ENCODE measurements at regions of chr12 and their contacts with region 1.

Region 1: DNA sequence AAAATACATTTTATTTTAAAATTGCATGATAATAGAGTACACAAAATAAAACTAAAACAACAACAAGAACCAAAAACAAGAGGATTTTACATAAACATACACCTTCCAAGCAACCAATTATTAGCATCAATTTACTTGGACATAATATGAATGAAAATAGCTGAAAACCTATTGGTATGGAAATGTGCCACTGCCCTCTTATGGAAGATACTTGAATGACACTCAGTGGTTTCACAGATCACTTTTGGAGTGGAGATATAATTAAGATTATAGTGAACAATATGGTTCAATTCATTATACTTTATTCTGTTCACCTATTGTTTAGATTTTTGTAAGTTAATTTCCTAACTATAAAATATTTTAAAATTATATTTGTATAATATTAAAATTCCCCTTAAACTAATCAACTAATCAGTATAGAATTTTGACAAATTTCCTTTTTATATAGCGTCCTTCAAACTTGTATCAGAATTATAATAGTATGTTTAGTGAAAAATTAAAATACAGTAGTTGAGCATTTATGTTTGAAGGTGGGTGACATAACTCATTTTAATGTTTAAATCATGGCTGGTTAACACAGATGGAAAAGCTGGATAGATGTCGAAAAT is 70.1 kb downstream of the SLC6A15 start:
- DNase-seq: no peak
- ATAC-seq: peak; percentile 65; the same call in 2 of the 3 replicates
- H3K4me3 ChIP-seq: no peak overlapping the region
- H3K27ac ChIP-seq: no peak overlapping the region
- H3K4me1 ChIP-seq: no peaks in the 10 kb centered on the region
- H3K27me3 ChIP-seq: no peaks in the 10 kb centered on the region
- CTCF ChIP-seq: peak; percentile 61 to 66 (median 61)
- EP300 ChIP-seq: no peak
- POLR2A ChIP-seq: no peak
- RAD21 ChIP-seq: peak; percentile 76

Region 2: DNA sequence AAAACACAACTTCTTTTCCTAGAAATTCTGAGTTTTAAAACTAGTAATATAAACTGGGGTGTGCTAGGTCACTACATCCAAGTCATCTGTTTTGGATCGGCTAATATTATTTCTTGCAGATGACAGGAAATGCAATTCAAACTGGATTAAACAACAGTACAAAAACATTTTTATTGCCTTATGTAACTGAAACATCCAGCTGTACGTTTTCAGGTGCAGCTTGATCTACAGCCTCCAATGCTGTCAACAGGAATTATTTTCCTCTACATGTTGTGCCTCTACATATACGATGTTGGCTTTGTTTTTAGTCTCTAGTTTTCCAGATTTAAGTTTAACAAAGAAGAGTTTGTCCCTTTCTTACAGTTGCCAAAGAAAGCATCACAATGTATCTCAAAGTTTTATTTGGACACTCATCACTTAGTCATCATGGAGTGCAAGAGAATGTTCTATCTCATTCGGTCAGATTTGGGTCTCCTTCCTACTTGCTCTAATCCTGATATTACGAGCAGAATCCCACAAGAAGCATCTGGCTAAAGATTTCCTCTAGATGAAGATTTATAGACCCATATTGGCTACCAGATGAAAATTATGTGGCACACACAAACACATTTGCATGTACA is 256.6 kb before region 1 on chr12:
- CTCF ChIA-PET with region 1: no interaction called
- POLR2A ChIA-PET with region 1: no interaction called
- RAD21 ChIA-PET with region 1: no interaction called
- SMC1A ChIA-PET with region 1: no interaction called
- in situ Hi-C with region 1: no loop called
- intact Hi-C with region 1: no loop called
- DNase-seq: no peak
- ATAC-seq: no peak
- H3K4me3 ChIP-seq: no peak overlapping the region
- H3K27ac ChIP-seq: no peak overlapping the region
- H3K4me1 ChIP-seq: no peaks in the 10 kb centered on the region
- H3K27me3 ChIP-seq: no peaks in the 10 kb centered on the region
- CTCF ChIP-seq: no peak
- EP300 ChIP-seq: no peak
- POLR2A ChIP-seq: no peak
- RAD21 ChIP-seq: no peak

Region 3: GRCh38 chr12:84779169-84779568 is 63.3 kb before region 1 on chr12:
- CTCF ChIA-PET with region 1: no interaction called
- POLR2A ChIA-PET with region 1: no interaction called
- RAD21 ChIA-PET with region 1: no interaction called
- SMC1A ChIA-PET with region 1: no interaction called
- in situ Hi-C with region 1: no loop called
- intact Hi-C with region 1: loop called (anchors 5 kb)
- DNase-seq: no peak
- ATAC-seq: no peak
- H3K4me3 ChIP-seq: no peak overlapping the region
- H3K27ac ChIP-seq: no peak overlapping the region
- H3K4me1 ChIP-seq: no peaks in the 10 kb centered on the region
- H3K27me3 ChIP-seq: no peaks in the 10 kb centered on the region
- CTCF ChIP-seq: no peak
- EP300 ChIP-seq: no peak
- POLR2A ChIP-seq: no peak
- RAD21 ChIP-seq: no peak

Region 4: GRCh38 chr12:84891106-84891838 is 48.8 kb after region 1 on chr12:
- CTCF ChIA-PET with region 1: no interaction called
- POLR2A ChIA-PET with region 1: no interaction called
- RAD21 ChIA-PET with region 1: no interaction called
- SMC1A ChIA-PET with region 1: no interaction called
- in situ Hi-C with region 1: no loop called
- intact Hi-C with region 1: no loop called
- DNase-seq: no peak
- ATAC-seq: no peak
- H3K4me3 ChIP-seq: no peak overlapping the region
- H3K27ac ChIP-seq: no peak overlapping the region
- H3K4me1 ChIP-seq: no peaks in the 10 kb centered on the region
- H3K27me3 ChIP-seq: no peaks in the 10 kb centered on the region
- CTCF ChIP-seq: no peak
- EP300 ChIP-seq: no peak
- POLR2A ChIP-seq: no peak
- RAD21 ChIP-seq: no peak

Region 5: GRCh38 chr12:85016423-85016822 is 173.9 kb after region 1 on chr12:
- CTCF ChIA-PET with region 1: no interaction called
- POLR2A ChIA-PET with region 1: no interaction called
- RAD21 ChIA-PET with region 1: no interaction called
- SMC1A ChIA-PET with region 1: no interaction called
- in situ Hi-C with region 1: no loop called
- intact Hi-C with region 1: no loop called
- DNase-seq: no peak
- ATAC-seq: no peak
- H3K4me3 ChIP-seq: no peak overlapping the region
- H3K27ac ChIP-seq: no peak overlapping the region
- H3K4me1 ChIP-seq: no peaks in the 10 kb centered on the region
- H3K27me3 ChIP-seq: no peaks in the 10 kb centered on the region
- CTCF ChIP-seq: no peak
- EP300 ChIP-seq: no peak
- POLR2A ChIP-seq: no peak
- RAD21 ChIP-seq: no peak